ENCODE measurements at regions of chr6 and their contacts with region 1.

Region 1: DNA sequence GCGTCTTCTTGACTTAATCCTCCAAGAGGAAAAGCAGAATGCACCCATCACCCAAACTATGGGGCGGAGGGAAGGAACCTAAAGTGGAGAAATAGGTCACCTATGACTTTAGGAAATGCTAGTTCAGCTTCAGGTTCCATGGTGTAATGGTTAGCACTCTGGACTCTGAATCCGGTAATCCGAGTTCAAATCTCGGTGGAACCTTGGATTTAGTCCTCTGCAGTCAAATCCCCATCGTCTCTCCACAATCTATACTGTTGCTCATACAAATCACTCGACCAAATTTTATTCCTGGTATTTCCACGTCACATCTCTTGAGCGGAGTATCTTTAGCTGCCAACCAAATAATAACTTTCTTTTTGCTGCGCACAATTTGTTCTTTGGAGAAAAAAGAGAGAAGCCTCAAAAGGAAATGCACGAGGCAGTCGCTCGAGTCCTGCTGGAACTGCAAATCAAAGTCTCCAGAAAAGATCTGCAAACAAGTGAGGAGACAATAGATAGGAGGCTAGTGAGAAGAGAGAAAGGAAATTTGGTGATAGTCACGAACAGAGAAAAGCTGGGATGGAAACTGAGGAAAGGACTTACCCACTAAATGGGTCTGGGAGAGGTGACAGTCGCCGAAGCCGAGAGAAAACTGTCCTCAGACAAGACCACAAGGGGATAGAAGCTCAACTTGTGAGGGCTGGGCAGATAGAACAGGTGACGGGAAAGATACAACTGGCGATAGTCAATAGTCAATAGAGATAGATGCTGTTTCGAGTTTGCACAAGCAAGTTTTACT is 16.6 kb downstream of the POM121L2 start:
- H3K4me3 ChIP-seq: peak overlapping the region; percentile 83
- H3K27ac ChIP-seq: peak overlapping the region; percentile 47; the same call in 1 of the 2 replicates
- H3K4me1 ChIP-seq: no peaks in the 10 kb centered on the region
- CTCF ChIP-seq: peak; percentile 38; the same call in 1 of the 2 replicates

Region 2: DNA sequence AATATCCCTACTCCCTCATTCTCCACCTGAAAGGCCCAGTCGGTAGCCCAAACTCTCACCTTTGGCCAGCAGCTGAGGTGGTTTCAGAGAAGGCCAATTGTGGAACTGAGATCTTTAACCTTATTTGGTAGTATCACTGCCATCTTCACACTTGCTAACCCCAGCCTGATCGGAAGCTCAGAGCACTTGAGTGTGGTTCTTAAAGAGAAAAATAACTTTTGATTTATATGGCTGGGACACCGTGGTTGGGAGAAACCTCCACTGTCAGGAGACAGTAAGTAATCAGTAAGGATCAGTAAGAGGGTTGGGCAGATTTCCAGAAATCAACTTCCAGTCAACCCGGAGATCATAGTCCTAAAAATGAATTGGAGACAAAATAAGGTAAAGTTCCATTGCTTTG is 70.8 kb before region 1 on chr6:
- CTCF ChIA-PET with region 1: no interaction called
- POLR2A ChIA-PET with region 1: no interaction called
- H3K4me3 ChIP-seq: no peak overlapping the region
- H3K27ac ChIP-seq: no peak overlapping the region
- H3K4me1 ChIP-seq: no peaks in the 10 kb centered on the region
- CTCF ChIP-seq: no peak

Region 3: DNA sequence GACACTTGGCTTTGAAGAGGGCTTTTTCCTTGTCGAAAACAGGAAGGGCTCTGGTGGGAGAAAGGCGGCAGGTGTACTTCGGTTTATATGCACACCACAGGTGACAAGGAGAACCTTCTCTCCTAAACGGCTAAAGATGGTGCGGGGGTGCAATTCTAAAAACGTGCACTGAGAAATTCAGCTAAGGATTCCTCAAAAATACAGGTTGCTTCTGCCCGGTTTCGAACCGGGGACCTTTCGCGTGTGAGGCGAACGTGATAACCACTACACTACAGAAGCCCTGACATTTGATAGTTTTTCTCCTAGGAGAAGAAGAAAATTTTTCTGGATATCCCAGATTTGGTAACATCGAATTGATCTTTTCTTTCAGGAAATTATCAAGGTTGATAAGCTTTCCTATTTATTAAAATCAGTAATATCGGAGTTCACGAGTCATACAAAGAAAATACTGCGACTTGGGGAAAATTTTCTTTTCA is 15.4 kb before region 1 on chr6:
- CTCF ChIA-PET with region 1: no interaction called
- POLR2A ChIA-PET with region 1: interaction called, 16 read pairs
- H3K4me3 ChIP-seq: peak overlapping the region; percentile 59
- H3K27ac ChIP-seq: peak overlapping the region; percentile 54
- H3K4me1 ChIP-seq: no peaks in the 10 kb centered on the region
- CTCF ChIP-seq: no peak

Region 4: DNA sequence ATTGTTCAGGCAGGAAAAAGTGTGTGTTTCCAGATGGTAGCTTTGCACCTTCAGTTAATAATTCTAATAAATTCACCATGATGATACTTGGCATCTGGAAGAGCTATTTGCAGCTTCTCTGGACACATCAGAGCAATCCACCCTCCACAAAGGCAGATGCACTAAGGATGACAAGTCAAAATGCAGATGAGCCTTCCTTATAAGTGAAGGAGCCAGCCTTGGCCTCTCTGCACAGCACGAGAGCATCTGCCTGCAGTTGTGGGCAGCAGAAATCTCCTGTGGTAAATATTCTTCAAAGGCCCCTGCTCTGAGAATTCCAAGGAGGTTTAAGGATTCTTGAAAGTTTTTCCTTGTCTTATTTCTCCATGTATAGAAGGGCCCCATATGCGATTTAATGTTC is 23.5 kb after region 1 on chr6:
- CTCF ChIA-PET with region 1: no interaction called
- POLR2A ChIA-PET with region 1: no interaction called
- H3K4me3 ChIP-seq: no peak overlapping the region
- H3K27ac ChIP-seq: no peak overlapping the region
- H3K4me1 ChIP-seq: no peaks in the 10 kb centered on the region
- CTCF ChIP-seq: no peak

Region 5: GRCh38 chr6:27472617-27473400 is 177.3 kb after region 1 on chr6 and contains the start of gene ZNF184:
- CTCF ChIA-PET with region 1: no interaction called
- POLR2A ChIA-PET with region 1: interaction called, 10 read pairs
- H3K4me3 ChIP-seq: peak within 1 kb of the TSS; percentile 59
- H3K27ac ChIP-seq: peak within 1 kb of the TSS; percentile 70
- H3K4me1 ChIP-seq: no peaks in the 10 kb centered on the region
- CTCF ChIP-seq: peak; percentile 66